ENCODE measurements at regions of chr9 and their contacts with region 1.

Region 1: GRCh38 chr9:98974994-98975712 is 31.4 kb downstream of the COL15A1 start:
- DNase-seq: peak; percentile 86
- ATAC-seq: peak; percentile 99
- H3K4me3 Mint-ChIP-seq: no peak overlapping the region
- H3K27ac Mint-ChIP-seq: no peak overlapping the region
- H3K4me1 Mint-ChIP-seq: peaks cover 9% of the 10 kb centered on the region
- H3K27me3 Mint-ChIP-seq: no peaks in the 10 kb centered on the region
- CTCF ChIP-seq: peak; percentile 93

Region 2: GRCh38 chr9:98964201-98964600 is 11.0 kb before region 1 on chr9:
- CTCF ChIA-PET with region 1: interaction called, 15 read pairs
- POLR2A ChIA-PET with region 1: interaction called, 3 read pairs
- intact Hi-C with region 1: no loop called
- DNase-seq: no peak
- ATAC-seq: no peak
- H3K4me3 Mint-ChIP-seq: no peak overlapping the region
- H3K27ac Mint-ChIP-seq: no peak overlapping the region
- H3K4me1 Mint-ChIP-seq: no peaks in the 10 kb centered on the region
- H3K27me3 Mint-ChIP-seq: peaks cover 7% of the 10 kb centered on the region
- CTCF ChIP-seq: no peak